OCI-LY7 (cell line): ENCODE measurements at regions of chr2 and their contacts with region 1.

Region 1: GRCh38 chr2:179876266-179876665 is 14.9 kb upstream of the ZNF385B start:
- DNase-seq: peak; percentile 54
- H3K4me3 ChIP-seq: peak overlapping the region; percentile 66
- H3K27ac ChIP-seq: peak overlapping the region; percentile 100
- H3K4me1 ChIP-seq: peaks cover 97% of the 10 kb centered on the region
- CTCF ChIP-seq: peak; percentile 72

Region 2: DNA sequence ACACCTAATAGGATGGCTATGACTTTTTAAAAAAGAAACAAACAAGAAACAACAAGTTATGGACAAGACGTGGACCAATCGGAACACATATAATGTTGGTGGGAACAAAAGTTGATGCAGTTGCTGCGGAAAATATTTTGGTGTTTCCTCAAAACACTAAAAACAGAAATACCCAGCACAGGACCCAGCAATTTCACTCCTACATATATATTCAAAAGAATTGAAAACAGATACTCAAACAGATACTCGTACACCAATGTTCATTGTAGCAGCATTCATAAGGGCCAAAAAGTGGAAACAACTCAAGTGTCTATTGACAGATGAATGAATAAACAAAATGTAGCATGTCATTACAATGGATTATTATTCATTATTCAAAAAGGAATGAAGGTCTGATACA is 838.5 kb before region 1 on chr2:
- CTCF ChIA-PET with region 1: no interaction called
- POLR2A ChIA-PET with region 1: interaction called, 10 read pairs
- intact Hi-C with region 1: no loop called
- DNase-seq: no peak
- H3K4me3 ChIP-seq: no peak overlapping the region
- H3K27ac ChIP-seq: no peak overlapping the region
- H3K4me1 ChIP-seq: no peaks in the 10 kb centered on the region
- CTCF ChIP-seq: no peak

Region 3: DNA sequence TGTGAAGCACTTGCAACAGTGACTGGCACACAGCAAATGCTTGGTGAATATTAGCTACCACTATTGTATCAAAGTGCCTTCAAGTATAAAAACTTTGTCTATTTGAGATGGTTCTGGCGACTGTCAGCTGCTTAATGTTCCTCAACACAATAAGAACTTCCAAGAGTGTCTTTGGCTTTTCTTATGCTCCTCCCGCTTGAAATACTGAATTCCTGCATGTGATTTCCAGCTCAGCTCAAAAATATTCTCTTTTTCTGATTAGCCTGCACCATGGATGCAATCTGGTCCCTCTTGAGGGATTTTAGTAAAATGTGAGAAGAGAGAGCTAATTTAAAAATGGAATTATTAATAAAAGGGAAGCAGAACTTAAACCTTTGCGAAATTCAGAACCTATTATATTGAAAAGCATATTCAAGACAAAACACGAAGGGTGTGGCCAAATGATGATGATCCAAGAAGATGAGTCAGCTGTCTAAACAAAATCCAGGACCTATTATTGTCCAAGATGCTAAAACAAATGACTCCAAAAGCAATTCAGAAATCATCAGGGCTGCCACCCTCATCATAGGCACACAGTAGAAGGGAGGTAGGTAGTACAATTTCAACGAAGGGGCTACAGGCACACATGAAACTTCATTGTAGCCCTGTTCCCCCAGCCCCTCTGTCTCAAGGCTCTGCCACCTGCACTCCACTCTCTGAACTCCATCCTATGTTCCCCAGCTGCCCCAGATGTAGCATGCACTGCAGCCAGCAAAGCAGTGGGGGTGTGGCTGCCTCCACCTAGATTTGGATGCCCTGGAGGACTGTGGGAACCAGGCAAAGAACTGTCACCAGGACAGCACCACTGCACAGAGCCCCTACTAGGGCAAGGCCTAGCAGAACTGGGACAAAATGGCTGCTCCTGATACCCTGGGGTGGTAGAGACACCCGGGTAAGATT is 205.0 kb before region 1 on chr2:
- CTCF ChIA-PET with region 1: no interaction called
- POLR2A ChIA-PET with region 1: no interaction called
- intact Hi-C with region 1: no loop called
- DNase-seq: no peak
- H3K4me3 ChIP-seq: no peak overlapping the region
- H3K27ac ChIP-seq: no peak overlapping the region
- H3K4me1 ChIP-seq: no peaks in the 10 kb centered on the region
- CTCF ChIP-seq: no peak

Region 4: GRCh38 chr2:179837408-179837807 is 38.9 kb before region 1 on chr2:
- CTCF ChIA-PET with region 1: interaction called, 3 read pairs
- POLR2A ChIA-PET with region 1: interaction called, 10 read pairs
- intact Hi-C with region 1: no loop called
- DNase-seq: no peak
- H3K4me3 ChIP-seq: no peak overlapping the region
- H3K27ac ChIP-seq: no peak overlapping the region
- H3K4me1 ChIP-seq: peaks cover 9% of the 10 kb centered on the region
- CTCF ChIP-seq: no peak

Region 5: GRCh38 chr2:179861416-179862067 is 14.7 kb before region 1 on chr2 and contains the start of gene ZNF385B:
- CTCF ChIA-PET with region 1: interaction called, 10 read pairs
- POLR2A ChIA-PET with region 1: interaction called, 805 read pairs
- intact Hi-C with region 1: loop called (anchors 1 kb)
- DNase-seq: peak; percentile 83
- H3K4me3 ChIP-seq: peak within 1 kb of the TSS; percentile 90
- H3K27ac ChIP-seq: peak within 1 kb of the TSS; percentile 83
- H3K4me1 ChIP-seq: peaks cover 63% of the 10 kb centered on the region
- CTCF ChIP-seq: no peak
- total RNA-seq, gene ZNF385B: 113 and 195 TPM in 2 replicates

Region 6: GRCh38 chr2:179890666-179891065 is 14.4 kb after region 1 on chr2:
- CTCF ChIA-PET with region 1: interaction called, 3 read pairs
- POLR2A ChIA-PET with region 1: interaction called, 805 read pairs
- intact Hi-C with region 1: no loop called
- DNase-seq: no peak
- H3K4me3 ChIP-seq: no peak overlapping the region
- H3K27ac ChIP-seq: no peak overlapping the region
- H3K4me1 ChIP-seq: peaks cover 1% of the 10 kb centered on the region
- CTCF ChIP-seq: no peak

Region 7: DNA sequence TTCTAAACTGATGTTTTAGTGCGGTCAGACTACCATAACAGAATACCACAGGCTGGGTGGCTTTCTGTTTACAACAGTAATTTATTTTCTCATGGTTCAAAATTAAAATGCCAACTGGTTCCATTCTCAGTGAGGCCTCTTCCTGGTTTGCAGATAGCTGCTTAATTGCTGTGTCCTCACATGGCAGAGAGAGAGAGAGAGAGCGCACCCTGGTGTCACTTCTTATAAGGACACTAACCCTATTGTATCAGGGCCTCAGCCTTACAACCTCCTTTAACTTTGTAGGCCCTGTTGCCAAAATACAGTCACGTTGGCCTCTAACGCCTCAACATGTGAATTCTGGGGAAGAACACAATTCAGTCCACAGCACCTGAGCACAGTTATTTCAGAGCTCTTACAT is 22.6 kb after region 1 on chr2:
- CTCF ChIA-PET with region 1: interaction called, 8 read pairs
- POLR2A ChIA-PET with region 1: interaction called, 10 read pairs
- intact Hi-C with region 1: no loop called
- DNase-seq: peak; percentile 92
- H3K4me3 ChIP-seq: no peak overlapping the region
- H3K27ac ChIP-seq: peak overlapping the region; percentile 45
- H3K4me1 ChIP-seq: peaks cover 18% of the 10 kb centered on the region
- CTCF ChIP-seq: peak; percentile 94